ENCODE measurements at regions of chr17 and their contacts with region 1.

Region 1: DNA sequence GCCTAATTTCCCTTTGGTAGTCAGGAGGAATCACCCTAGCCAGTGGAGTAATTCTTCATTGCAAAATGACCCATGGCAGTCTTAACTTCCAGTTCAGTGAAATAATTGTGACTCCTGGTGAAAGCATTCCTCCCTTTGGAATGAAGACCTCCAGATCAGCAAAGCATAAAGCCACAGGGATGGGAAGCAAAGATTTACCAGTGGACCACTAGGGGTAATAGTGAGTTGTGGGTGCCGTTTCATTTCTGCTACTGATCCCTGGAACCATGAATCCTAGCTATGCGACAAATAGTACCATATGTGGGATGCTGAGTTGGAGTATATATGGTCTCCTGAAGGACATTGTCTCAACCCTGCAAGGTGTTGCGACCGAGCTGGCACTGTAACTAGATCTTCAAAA is 13.7 kb downstream of the DYNLL2 start:
- DNase-seq: peak in 1 of 2 experiments; percentile 14
- H3K4me3 ChIP-seq: no peak overlapping the region
- H3K27ac ChIP-seq: no peak overlapping the region
- H3K4me1 ChIP-seq: no peaks in the 10 kb centered on the region
- H3K27me3 ChIP-seq: no peaks in the 10 kb centered on the region
- CTCF ChIP-seq: peak in 2 of 3 experiments; percentile 16 to 62; a peak in 2 of 4 replicates
- EP300 ChIP-seq: no peak
- POLR2A ChIP-seq: no peak
- RAD21 ChIP-seq: no peak; a peak in 1 of 4 replicates

Region 2: DNA sequence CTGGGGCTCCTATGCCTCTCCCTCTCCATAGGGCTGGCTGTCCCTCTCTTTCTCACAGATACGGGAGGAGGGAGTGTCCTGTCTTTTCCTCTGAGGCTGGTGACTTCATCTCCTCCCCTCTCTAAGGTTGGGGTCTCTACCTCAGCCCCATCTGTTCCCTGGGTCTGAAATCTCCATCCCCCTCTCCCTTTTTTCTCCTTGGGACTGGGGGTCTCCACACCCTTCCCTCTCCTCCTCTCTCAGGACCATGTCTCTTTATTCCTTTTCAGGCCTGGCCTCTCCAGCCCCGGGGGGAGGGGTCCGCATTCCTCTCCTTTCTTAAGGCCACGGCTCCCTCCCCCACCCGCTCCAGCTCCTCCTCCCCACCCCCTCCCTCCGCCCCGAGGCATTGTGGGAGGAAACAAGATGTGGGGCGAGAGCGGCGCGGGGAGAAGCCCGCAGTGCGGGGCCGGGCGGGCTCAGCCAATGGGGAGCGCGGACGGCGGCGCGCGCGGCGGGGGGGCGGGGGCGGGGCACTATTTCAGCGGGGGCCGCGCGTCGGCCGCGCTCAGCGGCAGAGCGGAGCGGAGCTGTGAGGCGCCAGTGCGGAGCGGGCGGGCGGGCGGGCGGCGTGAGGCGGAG is 13.9 kb before region 1 on chr17 and contains the start of gene DYNLL2:
- CTCF ChIA-PET with region 1: interaction called, 15 read pairs
- POLR2A ChIA-PET with region 1: interaction called, 52 read pairs
- DNase-seq: peak; percentile 84 to 89
- H3K4me3 ChIP-seq: peak within 1 kb of the TSS; percentile 78 to 91 (median 84)
- H3K27ac ChIP-seq: peak within 1 kb of the TSS; percentile 94
- H3K4me1 ChIP-seq: peaks cover 11 to 24% (median 18%) of the 10 kb centered on the region in 4 experiments
- H3K27me3 ChIP-seq: no peaks in the 10 kb centered on the region; a peak in 3 of 7 replicates
- CTCF ChIP-seq: no peak
- EP300 ChIP-seq: peak in 1 of 2 experiments; percentile 46; a peak in 1 of 3 replicates
- POLR2A ChIP-seq: peak; percentile 72 to 80
- RAD21 ChIP-seq: no peak
- total RNA-seq, gene DYNLL2: 49.7 and 52.7 TPM in 2 replicates

Region 3: GRCh38 chr17:58112970-58113631 is 16.2 kb after region 1 on chr17:
- CTCF ChIA-PET with region 1: interaction called, 20 read pairs
- POLR2A ChIA-PET with region 1: interaction called, 6 read pairs
- DNase-seq: peak in 1 of 2 experiments; percentile 96
- H3K4me3 ChIP-seq: no peak overlapping the region
- H3K27ac ChIP-seq: no peak overlapping the region
- H3K4me1 ChIP-seq: no peaks in the 10 kb centered on the region
- H3K27me3 ChIP-seq: no peaks in the 10 kb centered on the region
- CTCF ChIP-seq: peak; percentile 86 to 99 (median 93)
- EP300 ChIP-seq: no peak
- POLR2A ChIP-seq: no peak
- RAD21 ChIP-seq: peak; percentile 98 to 99

Measured in H1 (cell line).